ENCODE measurements at regions of chr14 and their contacts with region 1.

Region 1: GRCh38 chr14:35292051-35292769 is at the start of gene PSMA6:
- DNase-seq: peak; percentile 94 to 100 (median 99)
- ATAC-seq: peak; percentile 93 to 94
- H3K4me3 Mint-ChIP-seq: peak within 1 kb of the TSS; percentile 95 to 98 (median 98)
- H3K27ac Mint-ChIP-seq: peak within 1 kb of the TSS; percentile 94 to 99 (median 98)
- H3K4me1 Mint-ChIP-seq: peaks cover 8 to 60% (median 46%) of the 10 kb centered on the region in 4 donors
- H3K27me3 Mint-ChIP-seq: no peaks in the 10 kb centered on the region
- polyA plus RNA-seq, gene PSMA6: 256 to 378 (median 273) TPM

Region 2: DNA sequence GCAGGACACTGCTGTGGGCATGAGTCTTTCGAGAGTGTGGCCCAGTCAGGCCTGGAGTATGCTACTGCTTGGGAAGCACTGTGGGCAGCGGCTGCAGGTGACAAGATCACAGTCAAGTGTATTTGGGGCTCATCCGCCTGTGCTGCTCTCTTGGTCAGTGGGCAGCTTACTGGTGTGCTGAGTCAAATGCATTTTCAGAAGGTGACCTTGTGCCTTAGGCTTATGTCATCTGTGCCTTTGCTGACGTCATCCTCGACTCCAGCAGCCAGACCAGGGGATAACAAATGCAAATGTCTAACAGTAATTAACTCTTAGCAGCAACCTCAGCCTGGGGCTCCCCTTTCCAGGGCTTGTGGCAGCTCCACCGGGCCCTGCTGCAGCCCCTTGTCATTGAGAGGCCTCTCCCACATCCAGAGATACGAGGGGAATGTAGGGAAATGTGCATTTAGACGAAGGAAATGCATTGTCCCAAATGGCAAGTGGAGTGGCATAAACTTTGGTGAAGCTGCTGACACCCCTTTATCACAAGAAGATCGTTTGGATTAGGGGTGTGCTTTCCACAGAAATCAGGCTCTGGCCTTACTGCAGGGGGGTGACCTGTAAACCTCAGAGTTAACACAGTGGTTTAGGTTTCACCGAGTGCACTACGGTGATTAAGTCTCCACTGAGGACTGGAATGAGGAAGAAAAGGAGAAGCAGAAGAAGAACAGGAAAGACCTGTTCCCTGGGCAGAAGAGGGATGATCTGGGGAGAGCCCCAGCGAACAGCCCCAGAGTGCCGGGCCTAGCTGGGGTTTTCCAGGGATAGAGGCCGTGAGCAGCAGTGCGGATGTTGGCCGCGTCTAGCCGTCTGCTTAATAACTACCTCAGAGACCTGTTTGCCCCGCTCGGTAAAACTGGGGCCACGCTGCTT is 39.7 kb after region 1 on chr14:
- POLR2A ChIA-PET with region 1: interaction called, 17 read pairs
- DNase-seq: no peak
- ATAC-seq: no peak
- H3K4me3 Mint-ChIP-seq: peak overlapping the region in 1 of 10 donors; percentile 37
- H3K27ac Mint-ChIP-seq: peak overlapping the region; percentile 89 to 96 (median 93)
- H3K4me1 Mint-ChIP-seq: peaks cover 16 to 38% (median 30%) of the 10 kb centered on the region in 4 donors
- H3K27me3 Mint-ChIP-seq: no peaks in the 10 kb centered on the region

Region 3: DNA sequence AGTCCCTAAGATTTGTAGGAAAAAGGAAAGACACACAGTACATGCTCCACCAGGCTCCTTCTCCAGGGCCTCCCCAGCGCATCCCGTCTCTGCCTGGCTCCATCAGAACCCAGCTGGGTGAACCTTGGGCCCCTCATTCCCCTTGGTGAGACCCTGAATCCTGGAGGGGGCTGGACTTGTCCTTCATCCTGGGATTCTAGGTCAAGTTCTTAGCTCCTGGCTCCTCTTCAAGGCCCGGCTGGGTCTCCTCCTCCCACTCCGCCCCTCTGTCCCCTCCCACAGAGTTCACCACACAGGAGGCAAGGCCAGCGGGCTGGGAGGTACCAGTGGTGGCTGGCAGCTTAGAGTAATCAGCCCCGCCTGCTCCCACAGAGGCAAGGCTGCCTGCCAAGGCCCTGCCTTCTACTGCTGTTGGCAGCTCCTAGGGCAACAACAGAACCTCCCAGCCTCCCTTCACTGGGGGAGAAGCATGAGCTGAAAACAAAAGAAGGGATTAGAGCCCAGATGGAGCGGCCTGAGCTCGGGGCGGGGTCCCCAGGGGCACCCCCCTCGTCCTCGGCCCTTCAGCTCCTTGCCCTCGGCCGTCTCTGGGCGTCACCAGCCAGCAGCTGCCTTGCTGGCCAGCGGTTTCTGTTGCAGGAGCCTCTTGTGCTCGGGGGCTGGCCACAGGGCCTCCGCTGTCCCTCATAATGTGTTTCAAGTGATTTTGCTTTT is 49.4 kb after region 1 on chr14:
- POLR2A ChIA-PET with region 1: interaction called, 14 read pairs
- DNase-seq: peak; percentile 29 to 88 (median 56)
- ATAC-seq: peak; percentile 99
- H3K4me3 Mint-ChIP-seq: peak overlapping the region in 7 of 10 donors; percentile 36 to 79 (median 66)
- H3K27ac Mint-ChIP-seq: peak overlapping the region in 8 of 10 donors; percentile 13 to 91 (median 74)
- H3K4me1 Mint-ChIP-seq: peaks cover 14 to 49% (median 38%) of the 10 kb centered on the region in 4 donors
- H3K27me3 Mint-ChIP-seq: no peaks in the 10 kb centered on the region